ENCODE measurements at regions of chr13 and their contacts with region 1.

Region 1: DNA sequence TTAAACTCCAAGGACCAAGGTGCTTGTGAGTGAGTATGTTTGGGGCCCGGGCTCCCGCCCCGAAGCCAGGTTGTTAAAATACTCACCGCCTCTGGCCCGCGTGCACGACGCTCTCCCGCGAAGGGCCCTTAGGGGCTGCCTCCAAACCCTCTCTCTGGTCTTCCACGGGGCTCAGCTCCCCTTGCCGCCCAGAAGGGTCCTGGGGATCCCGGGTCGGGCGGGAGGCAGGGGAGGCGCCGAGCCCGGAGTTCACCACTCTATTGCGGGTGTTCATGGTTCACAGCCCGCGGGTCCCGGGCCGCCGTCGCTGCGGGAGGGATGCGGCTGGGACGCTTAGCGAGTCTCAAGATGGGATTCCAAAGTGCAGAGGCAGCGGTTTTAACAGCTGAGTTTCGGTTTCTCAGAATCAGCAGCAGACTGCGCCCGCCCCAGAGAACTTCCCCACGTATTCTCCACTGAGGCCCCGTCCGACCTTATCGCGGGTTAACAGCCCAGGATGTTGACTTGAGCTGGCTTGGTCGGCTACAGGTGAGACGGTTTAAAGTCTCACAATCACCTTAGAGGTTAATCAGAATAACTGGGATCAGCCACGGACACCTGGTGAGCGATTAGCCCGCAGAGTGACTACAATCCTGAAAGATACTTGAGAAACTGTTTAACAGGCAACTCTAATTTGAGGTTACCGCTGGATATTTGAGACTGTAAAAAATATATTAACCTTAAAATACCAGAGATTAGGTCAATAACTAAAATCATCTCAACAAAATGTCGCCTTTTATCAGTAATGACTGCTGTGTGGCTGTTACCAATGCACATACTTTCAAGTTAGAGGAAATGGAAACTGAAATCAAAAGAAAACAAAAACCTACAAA is at the start of gene EPSTI1:
- DNase-seq: peak; percentile 69
- ATAC-seq: peak; percentile 85
- H3K4me3 Mint-ChIP-seq: peak within 1 kb of the TSS; percentile 92
- H3K27ac Mint-ChIP-seq: peak within 1 kb of the TSS; percentile 99
- H3K4me1 Mint-ChIP-seq: peaks cover 58% of the 10 kb centered on the region
- H3K27me3 Mint-ChIP-seq: no peaks in the 10 kb centered on the region
- CTCF ChIP-seq: no peak
- total RNA-seq, gene EPSTI1: 30.6 and 32.8 TPM in 2 replicates

Region 2: GRCh38 chr13:42977219-42977659 is 14.9 kb before region 1 on chr13:
- CTCF ChIA-PET with region 1: interaction called, 49 read pairs
- POLR2A ChIA-PET with region 1: interaction called, 34 read pairs
- intact Hi-C with region 1: loop called (anchors 1 kb)
- DNase-seq: no peak
- ATAC-seq: peak; percentile 97
- H3K4me3 Mint-ChIP-seq: peak overlapping the region; percentile 7
- H3K27ac Mint-ChIP-seq: peak overlapping the region; percentile 42
- H3K4me1 Mint-ChIP-seq: peaks cover 25% of the 10 kb centered on the region
- H3K27me3 Mint-ChIP-seq: no peaks in the 10 kb centered on the region
- CTCF ChIP-seq: no peak

Region 3: GRCh38 chr13:43023289-43023951 is 31.3 kb after region 1 on chr13 and contains the start of gene DNAJC15:
- CTCF ChIA-PET with region 1: interaction called, 6 read pairs
- POLR2A ChIA-PET with region 1: interaction called, 50 read pairs
- intact Hi-C with region 1: loop called (anchors 1 kb)
- DNase-seq: peak; percentile 81
- ATAC-seq: peak; percentile 85
- H3K4me3 Mint-ChIP-seq: peak within 1 kb of the TSS; percentile 94
- H3K27ac Mint-ChIP-seq: peak within 1 kb of the TSS; percentile 97
- H3K4me1 Mint-ChIP-seq: peaks cover 47% of the 10 kb centered on the region
- H3K27me3 Mint-ChIP-seq: no peaks in the 10 kb centered on the region
- CTCF ChIP-seq: no peak
- total RNA-seq, gene DNAJC15: 19.1 and 19.3 TPM in 2 replicates

Region 4: GRCh38 chr13:43054803-43055802 is 63.0 kb after region 1 on chr13:
- CTCF ChIA-PET with region 1: no interaction called
- POLR2A ChIA-PET with region 1: interaction called, 11 read pairs
- intact Hi-C with region 1: loop called (anchors 1 kb)
- DNase-seq: no peak
- ATAC-seq: peak; percentile 53
- H3K4me3 Mint-ChIP-seq: no peak overlapping the region
- H3K27ac Mint-ChIP-seq: no peak overlapping the region
- H3K4me1 Mint-ChIP-seq: peaks cover 47% of the 10 kb centered on the region
- H3K27me3 Mint-ChIP-seq: no peaks in the 10 kb centered on the region
- CTCF ChIP-seq: no peak

Region 5: DNA sequence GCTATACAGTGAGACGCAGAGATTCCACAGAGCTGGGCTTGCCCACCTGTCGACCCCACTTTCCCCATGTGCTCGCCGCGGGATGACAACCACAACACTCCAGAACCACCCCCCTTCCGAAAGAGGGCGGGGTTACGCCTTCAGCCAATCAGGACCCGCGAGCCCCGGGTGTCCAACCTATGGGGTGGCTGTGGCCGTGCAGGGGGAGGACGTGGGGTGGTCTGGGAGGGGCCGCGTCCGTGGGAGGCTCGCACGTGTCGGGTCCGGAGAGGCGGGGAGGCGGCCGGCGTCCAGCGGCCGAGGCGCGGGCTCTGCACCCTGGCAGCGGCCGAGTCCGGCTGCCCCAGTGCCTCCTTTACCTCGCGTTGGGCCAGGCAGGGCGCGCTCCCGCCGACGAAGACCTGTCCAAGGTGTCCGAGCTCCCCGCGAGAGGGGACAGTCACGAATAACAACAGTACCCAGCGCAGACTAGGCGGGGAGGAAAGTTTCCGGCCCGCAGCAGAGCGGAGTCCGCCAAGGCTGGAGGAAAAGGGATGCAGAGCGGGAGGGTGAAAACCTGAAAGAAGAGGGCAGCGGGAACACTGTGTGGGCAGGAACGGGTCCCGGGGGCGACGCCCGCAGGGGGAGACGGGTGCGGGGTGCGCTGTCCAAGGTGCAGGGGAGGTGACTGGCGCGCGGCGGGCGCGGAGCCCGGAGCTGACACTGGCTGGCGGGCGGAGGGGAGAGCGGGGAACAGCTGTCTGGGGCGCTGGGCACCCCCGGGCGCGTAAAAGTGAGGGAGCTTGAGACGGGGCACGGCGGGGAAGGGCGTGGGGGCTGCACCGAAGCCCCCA is 793.7 kb after region 1 on chr13:
- CTCF ChIA-PET with region 1: no interaction called
- POLR2A ChIA-PET with region 1: no interaction called
- intact Hi-C with region 1: no loop called
- DNase-seq: no peak
- ATAC-seq: peak; percentile 33
- H3K4me3 Mint-ChIP-seq: peak overlapping the region; percentile 79
- H3K27ac Mint-ChIP-seq: no peak overlapping the region
- H3K4me1 Mint-ChIP-seq: peaks cover 16% of the 10 kb centered on the region
- H3K27me3 Mint-ChIP-seq: peaks cover 34% of the 10 kb centered on the region
- CTCF ChIP-seq: no peak